ENCODE measurements at regions of chr4 and their contacts with region 1.

Region 1: DNA sequence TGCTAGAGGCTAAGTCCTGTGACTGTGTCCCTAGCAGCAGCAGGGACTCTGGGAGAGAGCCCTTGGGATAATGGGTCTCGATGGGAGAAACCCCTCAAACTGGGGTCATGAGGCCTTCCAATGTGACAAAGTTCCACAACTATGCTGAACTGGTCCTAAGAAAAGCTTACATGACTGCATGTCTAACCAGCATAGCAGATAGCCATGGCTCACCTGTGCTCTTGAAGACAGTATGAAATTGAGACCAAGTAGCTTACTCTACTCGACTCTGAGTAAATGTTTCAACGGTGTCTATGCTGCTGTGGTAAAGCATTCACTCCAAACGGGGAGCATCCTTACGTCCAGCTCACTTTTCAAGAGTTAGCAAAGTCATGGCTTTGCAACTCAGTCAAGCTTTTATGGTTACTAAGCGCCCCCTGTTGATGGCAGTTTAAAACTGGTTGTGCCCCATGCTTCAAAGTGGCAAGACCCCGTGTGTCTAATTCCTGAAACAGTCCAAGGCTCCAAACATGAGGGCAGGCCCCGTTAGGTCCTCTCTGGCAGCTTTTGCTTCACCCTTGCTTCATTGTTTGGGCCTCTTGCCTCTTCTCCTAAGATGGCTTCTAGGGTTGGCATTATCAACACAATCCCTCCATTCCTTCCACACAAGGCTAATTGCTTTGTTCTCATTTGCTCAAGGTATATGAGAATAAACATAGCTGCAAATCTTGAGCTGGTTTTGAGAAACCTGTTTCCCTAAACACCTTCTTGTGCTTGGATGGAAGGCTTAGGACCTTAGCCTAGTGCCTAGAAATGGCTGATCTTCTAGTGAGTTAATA is 46.6 kb downstream of the CCNG2 start:
- DNase-seq: peak; percentile 72
- H3K4me3 ChIP-seq: no peak overlapping the region
- H3K27ac ChIP-seq: no peak overlapping the region
- H3K4me1 ChIP-seq: no peaks in the 10 kb centered on the region
- H3K27me3 ChIP-seq: no peaks in the 10 kb centered on the region
- CTCF ChIP-seq: peak; percentile 61 to 88 (median 78)
- POLR2A ChIP-seq: no peak

Region 2: DNA sequence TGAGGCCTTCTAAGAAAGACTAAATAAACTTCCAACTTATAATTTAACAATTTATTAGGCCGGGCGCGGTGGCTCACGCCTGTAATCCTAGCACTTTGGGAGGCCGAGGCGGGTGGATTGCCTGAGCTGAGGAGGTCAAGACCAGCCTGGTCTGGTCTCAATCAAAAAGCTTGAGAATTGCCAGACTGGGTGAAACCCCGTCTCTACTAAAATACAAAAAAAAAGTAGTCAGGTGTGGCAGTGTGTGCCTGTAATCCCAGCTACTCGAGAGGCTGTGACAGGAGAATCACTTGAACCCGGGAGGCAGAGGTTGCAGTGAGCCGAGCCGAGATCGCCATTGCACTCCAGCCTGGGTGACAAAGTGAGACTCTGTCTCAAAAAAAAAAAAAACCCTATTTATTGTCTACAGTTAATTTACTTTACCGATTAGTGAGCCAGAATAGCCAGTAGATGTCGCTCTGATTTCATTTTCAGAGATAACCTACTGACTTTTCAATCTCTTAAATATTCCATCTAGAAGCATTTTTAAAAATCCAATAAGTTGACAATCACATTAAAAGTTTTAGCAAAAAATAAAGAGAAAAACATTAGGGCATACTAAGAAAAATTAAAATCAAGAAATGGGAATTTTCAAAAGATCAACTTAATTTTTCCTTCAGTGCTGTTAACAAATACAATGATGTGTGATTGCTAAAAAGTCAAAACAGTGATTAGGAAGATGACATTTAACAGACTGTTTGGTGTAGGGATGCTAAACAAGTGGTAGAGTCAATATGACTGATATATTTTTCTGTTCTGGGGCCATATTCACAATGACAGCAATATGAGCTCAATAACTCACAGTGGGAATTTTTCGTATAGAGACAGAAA is 772.8 kb before region 1 on chr4:
- intact Hi-C with region 1: loop called (anchors 10 kb)
- DNase-seq: peak; percentile 10
- H3K4me3 ChIP-seq: no peak overlapping the region
- H3K27ac ChIP-seq: no peak overlapping the region
- H3K4me1 ChIP-seq: no peaks in the 10 kb centered on the region
- H3K27me3 ChIP-seq: no peaks in the 10 kb centered on the region
- CTCF ChIP-seq: peak in 3 of 4 experiments; percentile 62 to 70 (median 67)
- POLR2A ChIP-seq: no peak

Region 3: DNA sequence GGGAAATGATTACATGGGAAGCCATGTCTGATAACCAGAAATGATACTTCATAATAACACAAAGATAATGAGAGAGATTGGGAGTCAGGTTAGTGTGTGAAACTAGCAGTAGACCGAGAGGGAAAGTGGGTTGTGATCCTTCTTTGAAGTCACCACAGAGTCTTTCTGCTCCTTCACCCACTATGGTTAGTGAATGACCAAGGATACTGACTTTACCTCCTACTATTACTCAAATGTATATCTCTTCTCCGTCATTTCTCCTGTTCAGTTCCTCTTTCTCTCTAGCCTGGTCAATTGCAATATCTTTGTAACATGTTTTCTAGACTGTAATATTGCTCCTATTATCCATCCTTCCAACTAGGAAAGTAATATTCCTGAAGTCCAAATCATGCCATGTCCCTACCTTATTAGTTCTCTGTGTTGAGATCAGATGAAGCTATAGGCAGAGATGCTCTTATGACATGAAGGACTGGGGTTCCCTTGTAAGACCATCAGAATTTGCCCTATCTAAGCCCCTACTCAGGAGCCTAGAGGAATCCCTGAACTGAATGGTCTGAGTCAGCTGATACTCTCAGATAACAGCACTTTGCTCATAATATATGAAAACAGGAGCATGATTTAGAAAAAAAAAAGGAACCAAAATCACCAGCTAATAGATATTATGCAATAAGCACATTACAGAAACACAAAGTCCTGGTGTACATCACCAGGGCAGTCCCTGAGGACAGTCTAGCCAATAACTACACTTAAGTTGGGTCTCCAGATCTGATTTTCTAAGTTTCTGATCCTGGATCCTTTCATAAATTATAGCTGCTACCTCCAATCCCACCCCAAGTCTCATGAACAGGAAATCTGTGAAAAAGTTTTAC is 687.4 kb before region 1 on chr4:
- intact Hi-C with region 1: loop called (anchors 10 kb)
- DNase-seq: no peak
- H3K4me3 ChIP-seq: no peak overlapping the region
- H3K27ac ChIP-seq: no peak overlapping the region
- H3K4me1 ChIP-seq: no peaks in the 10 kb centered on the region
- H3K27me3 ChIP-seq: no peaks in the 10 kb centered on the region
- CTCF ChIP-seq: no peak
- POLR2A ChIP-seq: no peak

Region 4: GRCh38 chr4:77044461-77045150 is 159.0 kb before region 1 on chr4:
- intact Hi-C with region 1: loop called (anchors 5 kb)
- DNase-seq: no peak
- H3K4me3 ChIP-seq: no peak overlapping the region
- H3K27ac ChIP-seq: no peak overlapping the region
- H3K4me1 ChIP-seq: no peaks in the 10 kb centered on the region
- H3K27me3 ChIP-seq: no peaks in the 10 kb centered on the region
- CTCF ChIP-seq: peak in 3 of 4 experiments; percentile 41 to 55 (median 54)
- POLR2A ChIP-seq: no peak

Region 5: DNA sequence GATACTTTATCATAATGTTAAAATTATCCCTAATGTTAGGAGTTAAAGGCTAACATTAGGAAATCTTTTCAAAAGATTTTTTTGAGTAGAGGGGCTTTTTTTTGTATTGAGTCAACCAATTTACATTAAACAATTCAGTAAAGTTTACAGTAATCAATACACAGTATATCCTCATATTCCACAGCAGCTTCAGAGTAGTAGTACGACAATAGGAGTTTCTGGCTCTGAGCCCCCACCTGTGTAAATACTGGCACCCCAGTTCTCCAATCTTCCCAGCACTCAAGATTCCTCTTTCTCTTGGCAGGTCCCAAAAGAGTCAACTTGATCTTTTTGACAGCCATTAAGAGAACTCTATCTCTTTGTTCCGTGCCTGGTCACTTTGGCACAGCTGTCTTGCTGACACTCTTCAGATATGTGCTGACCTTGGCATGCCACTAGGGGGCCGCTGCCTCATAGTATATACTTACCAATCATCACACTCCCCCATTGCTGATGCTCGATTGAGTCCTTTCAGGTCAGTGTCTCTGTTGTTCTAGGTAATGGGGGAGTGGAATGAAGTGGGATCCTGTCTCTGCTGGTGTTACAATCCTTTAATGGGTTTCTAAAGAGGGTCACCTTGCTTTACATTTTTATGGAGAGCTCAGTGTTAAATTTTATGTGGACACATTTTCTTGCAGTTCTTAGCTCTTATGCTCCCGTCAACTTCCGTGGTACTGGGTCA is 108.3 kb before region 1 on chr4:
- intact Hi-C with region 1: loop called (anchors 2 kb)
- DNase-seq: peak; percentile 80
- H3K4me3 ChIP-seq: no peak overlapping the region
- H3K27ac ChIP-seq: peak overlapping the region in 1 of 2 donors; percentile 42
- H3K4me1 ChIP-seq: no peaks in the 10 kb centered on the region
- H3K27me3 ChIP-seq: no peaks in the 10 kb centered on the region
- CTCF ChIP-seq: peak; percentile 44 to 86 (median 84)
- POLR2A ChIP-seq: no peak

Region 6: DNA sequence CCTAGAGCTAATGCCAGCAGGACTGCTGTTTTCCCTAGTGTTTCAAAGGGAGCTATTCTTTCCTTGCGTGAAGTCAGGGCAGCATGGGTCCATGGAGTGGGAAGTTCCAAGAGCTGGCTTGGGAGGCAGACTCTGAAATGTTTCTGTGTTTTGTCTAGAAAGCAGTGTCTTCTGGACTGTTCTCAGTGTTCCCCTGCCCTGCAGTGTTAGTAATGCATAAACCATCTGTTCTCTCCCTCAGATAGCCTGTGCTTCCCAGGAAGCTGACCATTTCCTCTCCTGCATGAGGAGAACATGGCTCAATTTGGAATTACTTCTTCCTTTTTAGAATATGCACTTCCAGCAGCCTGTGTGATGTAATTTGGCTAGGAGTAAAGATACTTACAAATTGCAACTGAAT is 285.3 kb after region 1 on chr4:
- intact Hi-C with region 1: no loop called
- DNase-seq: no peak
- H3K4me3 ChIP-seq: no peak overlapping the region
- H3K27ac ChIP-seq: no peak overlapping the region
- H3K4me1 ChIP-seq: no peaks in the 10 kb centered on the region
- H3K27me3 ChIP-seq: no peaks in the 10 kb centered on the region
- CTCF ChIP-seq: no peak
- POLR2A ChIP-seq: no peak

Measured in prostate gland (tissue), 2 donors.